Activated B cell treated with CpG ODN at 0.5 μM for 24 hours (primary cell): ENCODE measurements at regions of chr17 and their contacts with region 1.

Region 1: GRCh38 chr17:81512560-81513371 is at the start of gene ACTG1:
- DNase-seq: peak; percentile 89
- ATAC-seq: peak; percentile 32
- H3K4me3 Mint-ChIP-seq: peak within 1 kb of the TSS; percentile 99
- H3K27ac Mint-ChIP-seq: peak within 1 kb of the TSS; percentile 94
- H3K4me1 Mint-ChIP-seq: peaks cover 54% of the 10 kb centered on the region
- H3K27me3 Mint-ChIP-seq: no peaks in the 10 kb centered on the region
- CTCF ChIP-seq: no peak
- total RNA-seq, gene ACTG1: 2,863 and 2,949 TPM in 2 replicates

Region 2: DNA sequence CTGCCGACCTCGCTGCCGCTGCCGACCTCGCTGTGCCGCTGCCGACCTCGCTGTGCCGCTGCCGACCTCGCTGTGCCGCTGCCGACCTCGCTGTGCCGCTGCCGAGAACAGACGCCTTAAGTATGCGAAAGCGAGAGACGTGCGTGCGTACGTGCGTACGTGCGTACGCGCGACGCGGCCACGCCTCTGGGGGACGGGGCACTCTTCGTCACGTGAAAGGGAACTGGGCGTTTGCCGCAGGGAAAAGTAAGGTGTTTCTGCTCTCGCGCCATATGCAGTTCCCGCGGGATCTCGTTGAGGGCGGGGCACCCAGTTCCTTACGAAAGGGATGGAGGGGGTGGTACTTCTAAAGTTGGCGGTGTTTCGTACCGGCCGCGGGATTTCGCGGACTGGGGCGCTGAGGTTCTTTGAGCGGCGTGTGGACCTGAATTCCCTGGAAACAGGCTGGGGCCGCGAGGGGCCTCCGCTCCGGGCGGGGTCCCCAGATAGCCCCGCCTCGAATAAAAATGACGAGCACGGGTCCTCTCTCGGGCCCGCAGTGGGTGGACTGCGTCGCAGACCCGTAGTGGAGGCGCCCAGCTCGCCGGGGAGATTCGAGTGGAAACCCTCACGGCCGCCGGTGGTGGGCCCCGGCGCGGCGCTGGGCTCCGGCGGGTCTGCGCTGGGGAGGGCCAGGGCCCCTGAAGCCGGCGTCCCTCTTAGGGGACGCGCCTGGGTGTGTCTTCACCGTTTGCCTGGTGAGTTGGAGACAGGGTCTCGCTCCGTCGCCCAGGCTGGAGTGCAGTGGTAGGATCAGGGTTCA is 1365.5 kb before region 1 on chr17 and contains the start of gene EIF4A3:
- CTCF ChIA-PET with region 1: no interaction called
- POLR2A ChIA-PET with region 1: no interaction called
- intact Hi-C with region 1: loop called (anchors 5 kb)
- DNase-seq: peak; percentile 95
- ATAC-seq: peak; percentile 88
- H3K4me3 Mint-ChIP-seq: peak within 1 kb of the TSS; percentile 98
- H3K27ac Mint-ChIP-seq: peak within 1 kb of the TSS; percentile 90
- H3K4me1 Mint-ChIP-seq: peaks cover 42% of the 10 kb centered on the region
- H3K27me3 Mint-ChIP-seq: no peaks in the 10 kb centered on the region
- CTCF ChIP-seq: no peak
- total RNA-seq, gene EIF4A3: 84.0 and 88.1 TPM in 2 replicates

Region 3: GRCh38 chr17:81346090-81346907 is 166.5 kb before region 1 on chr17:
- CTCF ChIA-PET with region 1: no interaction called
- POLR2A ChIA-PET with region 1: interaction called, 6 read pairs
- intact Hi-C with region 1: loop called (anchors 1 kb)
- DNase-seq: peak; percentile 87
- ATAC-seq: peak; percentile 96
- H3K4me3 Mint-ChIP-seq: peak overlapping the region; percentile 74
- H3K27ac Mint-ChIP-seq: no peak overlapping the region
- H3K4me1 Mint-ChIP-seq: peaks cover 20% of the 10 kb centered on the region
- H3K27me3 Mint-ChIP-seq: peaks cover 24% of the 10 kb centered on the region
- CTCF ChIP-seq: no peak

Region 4: DNA sequence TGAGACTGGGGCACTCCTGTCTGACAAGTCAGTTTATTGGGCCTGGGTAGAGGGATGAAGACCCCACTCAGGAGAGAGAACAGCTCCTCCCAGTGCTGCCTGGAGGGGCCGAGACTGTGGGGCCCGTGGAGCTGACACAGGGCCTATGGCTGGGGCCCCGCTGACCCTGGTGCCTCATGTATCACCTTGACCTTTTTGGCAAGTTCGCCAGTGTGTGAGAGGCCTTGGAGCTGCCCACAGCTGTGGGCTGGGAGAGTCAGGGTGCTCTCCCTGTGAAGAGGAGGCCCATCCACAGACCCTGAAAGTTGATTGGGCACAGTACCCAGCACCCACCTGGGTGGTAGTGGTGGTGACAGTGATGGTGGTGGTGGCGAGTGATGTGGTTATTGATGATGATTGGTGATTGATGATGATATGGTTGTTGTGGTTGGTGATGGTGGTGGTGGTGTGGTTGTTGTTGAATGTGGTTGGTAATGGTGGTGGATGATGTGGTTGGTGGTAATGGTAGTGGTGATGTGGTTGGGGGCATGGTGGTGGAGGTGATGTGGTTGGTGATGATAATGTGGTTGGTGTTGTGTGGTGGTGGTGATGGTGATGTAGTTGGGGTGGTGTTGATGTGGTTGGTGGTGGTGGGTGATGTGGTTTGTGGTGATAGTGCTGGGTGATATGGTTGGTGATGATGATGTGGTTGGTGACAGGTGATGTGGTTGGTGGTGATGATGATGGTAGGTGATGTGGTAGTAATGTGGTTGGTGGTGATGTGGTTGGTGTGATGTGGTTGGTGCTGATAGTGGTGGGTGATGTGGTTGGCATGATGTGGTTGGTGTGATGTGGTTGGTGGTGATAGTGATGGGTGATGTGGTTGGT is 88.4 kb before region 1 on chr17:
- CTCF ChIA-PET with region 1: no interaction called
- POLR2A ChIA-PET with region 1: no interaction called
- intact Hi-C with region 1: no loop called
- DNase-seq: no peak
- ATAC-seq: no peak
- H3K4me3 Mint-ChIP-seq: no peak overlapping the region
- H3K27ac Mint-ChIP-seq: no peak overlapping the region
- H3K4me1 Mint-ChIP-seq: peaks cover 10% of the 10 kb centered on the region
- H3K27me3 Mint-ChIP-seq: peaks cover 5% of the 10 kb centered on the region
- CTCF ChIP-seq: no peak

Region 5: DNA sequence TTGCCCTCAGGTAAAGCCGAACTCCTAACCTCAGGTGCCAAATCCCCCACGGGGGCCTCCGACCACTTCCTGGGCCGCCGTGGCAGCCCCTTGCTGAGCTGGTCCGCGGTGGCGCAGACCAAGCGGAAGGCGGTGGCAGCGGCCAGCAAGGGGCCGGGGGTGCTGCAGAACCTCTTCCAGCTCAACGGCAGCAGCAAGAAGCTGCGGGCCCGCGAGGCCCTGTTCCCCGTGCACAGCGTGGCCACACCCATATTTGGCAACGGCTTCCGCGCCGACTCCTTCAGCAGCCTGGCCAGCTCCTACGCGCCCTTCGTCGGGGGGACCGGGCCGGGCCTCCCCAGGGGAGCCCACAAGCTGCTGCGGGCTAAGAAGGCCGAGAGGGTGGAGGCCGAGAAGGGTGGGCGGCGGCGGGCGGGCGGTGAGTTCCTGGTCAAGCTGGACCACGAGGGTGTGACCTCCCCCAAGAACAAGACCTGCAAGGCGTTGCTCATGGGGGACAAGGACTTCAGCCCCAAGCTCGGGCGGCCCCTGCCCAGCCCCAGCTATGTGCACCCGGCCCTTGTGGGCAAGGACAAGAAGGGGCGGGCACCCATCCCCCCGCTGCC is 51.8 kb before region 1 on chr17:
- CTCF ChIA-PET with region 1: no interaction called
- POLR2A ChIA-PET with region 1: no interaction called
- intact Hi-C with region 1: no loop called
- DNase-seq: no peak
- ATAC-seq: no peak
- H3K4me3 Mint-ChIP-seq: no peak overlapping the region
- H3K27ac Mint-ChIP-seq: no peak overlapping the region
- H3K4me1 Mint-ChIP-seq: no peaks in the 10 kb centered on the region
- H3K27me3 Mint-ChIP-seq: no peaks in the 10 kb centered on the region
- CTCF ChIP-seq: no peak

Region 6: GRCh38 chr17:81537343-81537855 is 24.6 kb after region 1 on chr17:
- CTCF ChIA-PET with region 1: interaction called, 5 read pairs
- POLR2A ChIA-PET with region 1: interaction called, 35 read pairs
- intact Hi-C with region 1: no loop called
- DNase-seq: peak; percentile 45
- ATAC-seq: peak; percentile 81
- H3K4me3 Mint-ChIP-seq: no peak overlapping the region
- H3K27ac Mint-ChIP-seq: no peak overlapping the region
- H3K4me1 Mint-ChIP-seq: peaks cover 23% of the 10 kb centered on the region
- H3K27me3 Mint-ChIP-seq: peaks cover 4% of the 10 kb centered on the region
- CTCF ChIP-seq: no peak

Region 7: DNA sequence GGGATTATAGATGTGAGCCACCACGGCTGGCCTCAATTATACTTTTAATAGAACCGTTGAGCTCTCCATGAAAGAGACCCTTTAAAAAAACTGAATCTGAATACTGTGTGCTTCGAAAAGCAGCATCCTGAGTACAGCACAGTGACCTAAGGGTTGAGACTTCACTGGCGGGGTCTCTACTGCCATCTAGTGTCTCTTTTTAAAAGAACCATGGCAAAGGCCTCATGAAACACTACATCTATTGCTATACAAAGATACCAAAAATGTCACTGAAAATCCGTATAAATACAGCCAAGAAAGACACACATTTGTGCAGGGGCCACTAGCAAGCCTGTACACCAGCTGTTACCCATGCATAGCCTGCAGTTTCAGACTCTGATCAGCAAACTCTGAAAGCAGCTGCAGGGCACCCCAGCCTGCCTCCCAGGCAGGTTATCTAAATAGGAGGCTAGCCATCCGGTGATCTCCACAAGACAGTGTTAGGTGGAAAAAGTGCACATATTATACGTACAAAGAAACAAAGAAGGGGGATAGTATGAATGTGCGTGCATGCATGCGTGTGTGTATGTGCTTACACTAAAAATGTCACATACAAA is 88.9 kb after region 1 on chr17:
- CTCF ChIA-PET with region 1: interaction called, 23 read pairs
- POLR2A ChIA-PET with region 1: interaction called, 26 read pairs
- intact Hi-C with region 1: loop called (anchors 1 kb)
- DNase-seq: no peak
- ATAC-seq: peak; percentile 63
- H3K4me3 Mint-ChIP-seq: no peak overlapping the region
- H3K27ac Mint-ChIP-seq: peak overlapping the region; percentile 57
- H3K4me1 Mint-ChIP-seq: peaks cover 46% of the 10 kb centered on the region
- H3K27me3 Mint-ChIP-seq: no peaks in the 10 kb centered on the region
- CTCF ChIP-seq: peak; percentile 19